Activated CD4-positive, alpha-beta T cell treated with anti-CD3 and anti-CD28 coated beads, Interleukin-2, amount 10 ng/mL, durations not matched to agents 7 days and 5 days (primary cell): ENCODE measurements at regions of chr15 and their contacts with region 1.

Region 1: DNA sequence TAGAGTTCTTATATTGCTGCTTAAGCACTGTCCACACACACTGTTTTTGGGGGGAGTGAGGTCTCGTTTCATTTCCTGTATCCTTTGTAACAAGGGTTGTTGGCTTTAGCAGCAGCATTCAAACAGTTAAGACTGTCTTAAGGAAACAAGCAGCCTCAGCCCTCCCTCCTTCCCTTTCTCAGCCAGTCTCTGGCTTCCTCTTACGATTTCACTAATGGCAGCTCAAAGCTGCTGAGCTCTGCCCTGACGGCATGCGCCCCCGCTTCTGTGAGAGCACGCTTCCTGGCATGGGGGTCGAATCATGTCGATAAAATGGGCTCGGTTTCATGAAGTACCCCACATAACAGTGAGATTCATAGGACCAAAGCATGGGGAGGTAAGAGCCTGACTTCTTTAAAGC is 105.0 kb downstream of the KLHL25 start:
- DNase-seq: peak; percentile 78
- H3K4me3 Mint-ChIP-seq: peak overlapping the region; percentile 93
- H3K27ac Mint-ChIP-seq: peak overlapping the region; percentile 98
- H3K4me1 Mint-ChIP-seq: peaks cover 73% of the 10 kb centered on the region
- H3K27me3 Mint-ChIP-seq: no peaks in the 10 kb centered on the region

Region 2: GRCh38 chr15:85702321-85703101 is 12.8 kb after region 1 on chr15:
- CTCF ChIA-PET with region 1: interaction called, 10 read pairs
- POLR2A ChIA-PET with region 1: interaction called, 13 read pairs
- DNase-seq: peak; percentile 33
- H3K4me3 Mint-ChIP-seq: peak overlapping the region; percentile 60
- H3K27ac Mint-ChIP-seq: peak overlapping the region; percentile 89
- H3K4me1 Mint-ChIP-seq: peaks cover 60% of the 10 kb centered on the region
- H3K27me3 Mint-ChIP-seq: no peaks in the 10 kb centered on the region